Activated CD4-positive, alpha-beta T cell treated with anti-CD3 and anti-CD28 coated beads, Interleukin-2, amount 10 ng/mL, durations not matched to agents 24 days and 14 days (primary cell): ENCODE measurements at regions of chr10 and their contacts with region 1.

Region 1: DNA sequence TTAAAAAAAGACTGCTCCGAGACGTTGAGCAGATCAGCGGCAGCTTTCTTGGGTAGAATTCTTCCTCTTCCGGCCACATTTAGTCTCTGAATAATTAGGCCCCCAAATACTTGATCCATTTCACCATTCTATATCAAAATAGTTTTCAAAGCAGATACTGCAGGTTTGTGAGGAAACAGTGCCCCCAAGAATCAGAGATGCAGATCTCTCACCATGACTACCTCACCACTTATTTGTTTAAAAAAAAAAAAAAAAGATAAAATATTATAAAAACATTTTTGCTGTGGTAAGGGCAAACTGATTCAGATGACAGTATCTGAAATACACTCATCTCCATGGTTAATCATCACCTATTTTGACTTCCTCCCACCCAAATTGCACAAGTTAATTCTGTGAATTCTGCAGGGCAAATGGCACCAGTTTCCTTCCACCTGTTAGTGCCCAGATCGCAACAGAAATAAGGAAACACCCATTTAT is 210.4 kb downstream of the FAM107B start:
- DNase-seq: peak; percentile 72
- H3K4me3 Mint-ChIP-seq: peak overlapping the region; percentile 83
- H3K27ac Mint-ChIP-seq: peak overlapping the region; percentile 97
- H3K4me1 Mint-ChIP-seq: peaks cover 80% of the 10 kb centered on the region
- H3K27me3 Mint-ChIP-seq: no peaks in the 10 kb centered on the region

Region 2: GRCh38 chr10:14550471-14550981 is 13.8 kb before region 1 on chr10:
- intact Hi-C with region 1: loop called (anchors 2 kb)
- DNase-seq: no peak
- H3K4me3 Mint-ChIP-seq: no peak overlapping the region
- H3K27ac Mint-ChIP-seq: peak overlapping the region; percentile 40
- H3K4me1 Mint-ChIP-seq: peaks cover 63% of the 10 kb centered on the region
- H3K27me3 Mint-ChIP-seq: no peaks in the 10 kb centered on the region

Region 3: DNA sequence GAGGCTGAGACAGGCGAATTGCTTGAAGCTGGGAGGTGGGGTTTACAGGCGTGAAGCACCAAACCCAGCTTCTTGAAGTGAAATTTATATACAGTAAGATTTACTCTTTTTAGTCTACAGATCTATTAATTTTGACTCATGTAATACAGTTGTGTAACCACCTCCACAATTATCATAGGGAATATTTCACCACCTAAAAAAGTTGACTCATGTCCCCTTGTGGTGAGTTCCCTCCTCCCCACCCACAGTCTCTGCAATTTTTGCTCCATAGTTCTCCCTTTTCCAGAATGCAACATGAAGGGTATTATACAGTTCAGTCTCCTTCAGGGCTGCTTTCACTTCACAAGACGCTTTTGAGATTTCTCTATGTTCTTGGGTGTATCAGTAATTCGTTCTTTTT is 53.5 kb after region 1 on chr10:
- intact Hi-C with region 1: no loop called
- DNase-seq: no peak
- H3K4me3 Mint-ChIP-seq: no peak overlapping the region
- H3K27ac Mint-ChIP-seq: no peak overlapping the region
- H3K4me1 Mint-ChIP-seq: peaks cover 25% of the 10 kb centered on the region
- H3K27me3 Mint-ChIP-seq: no peaks in the 10 kb centered on the region

Region 4: GRCh38 chr10:14659626-14660196 is 95.4 kb after region 1 on chr10:
- intact Hi-C with region 1: loop called (anchors 2 kb)
- DNase-seq: peak; percentile 89
- H3K4me3 Mint-ChIP-seq: peak overlapping the region; percentile 64
- H3K27ac Mint-ChIP-seq: peak overlapping the region; percentile 92
- H3K4me1 Mint-ChIP-seq: peaks cover 60% of the 10 kb centered on the region
- H3K27me3 Mint-ChIP-seq: no peaks in the 10 kb centered on the region